CD8-positive, alpha-beta T cell (primary cell): ENCODE measurements at regions of chr4 and their contacts with region 1.

Region 1: GRCh38 chr4:113935190-113935589 is 44.3 kb downstream of the ARSJ start:
- DNase-seq: no peak
- ATAC-seq: no peak
- H3K4me3 ChIP-seq: no peak overlapping the region
- H3K4me3 Mint-ChIP-seq: no peak overlapping the region
- H3K27ac ChIP-seq: no peak overlapping the region
- H3K27ac Mint-ChIP-seq: no peak overlapping the region
- H3K4me1 ChIP-seq: no peaks in the 10 kb centered on the region
- H3K4me1 Mint-ChIP-seq: no peaks in the 10 kb centered on the region
- H3K27me3 ChIP-seq: no peaks in the 10 kb centered on the region
- H3K27me3 Mint-ChIP-seq: no peaks in the 10 kb centered on the region
- CTCF ChIP-seq: no peak

Region 2: GRCh38 chr4:113881256-113881655 is 53.9 kb before region 1 on chr4:
- CTCF ChIA-PET with region 1: no interaction called
- POLR2A ChIA-PET with region 1: no interaction called
- intact Hi-C with region 1: no loop called
- DNase-seq: no peak
- ATAC-seq: no peak
- H3K4me3 ChIP-seq: no peak overlapping the region
- H3K4me3 Mint-ChIP-seq: no peak overlapping the region
- H3K27ac ChIP-seq: no peak overlapping the region
- H3K27ac Mint-ChIP-seq: no peak overlapping the region
- H3K4me1 ChIP-seq: peaks cover 6% of the 10 kb centered on the region
- H3K4me1 Mint-ChIP-seq: peaks cover 2% of the 10 kb centered on the region
- H3K27me3 ChIP-seq: no peaks in the 10 kb centered on the region
- H3K27me3 Mint-ChIP-seq: no peaks in the 10 kb centered on the region
- CTCF ChIP-seq: no peak

Region 3: DNA sequence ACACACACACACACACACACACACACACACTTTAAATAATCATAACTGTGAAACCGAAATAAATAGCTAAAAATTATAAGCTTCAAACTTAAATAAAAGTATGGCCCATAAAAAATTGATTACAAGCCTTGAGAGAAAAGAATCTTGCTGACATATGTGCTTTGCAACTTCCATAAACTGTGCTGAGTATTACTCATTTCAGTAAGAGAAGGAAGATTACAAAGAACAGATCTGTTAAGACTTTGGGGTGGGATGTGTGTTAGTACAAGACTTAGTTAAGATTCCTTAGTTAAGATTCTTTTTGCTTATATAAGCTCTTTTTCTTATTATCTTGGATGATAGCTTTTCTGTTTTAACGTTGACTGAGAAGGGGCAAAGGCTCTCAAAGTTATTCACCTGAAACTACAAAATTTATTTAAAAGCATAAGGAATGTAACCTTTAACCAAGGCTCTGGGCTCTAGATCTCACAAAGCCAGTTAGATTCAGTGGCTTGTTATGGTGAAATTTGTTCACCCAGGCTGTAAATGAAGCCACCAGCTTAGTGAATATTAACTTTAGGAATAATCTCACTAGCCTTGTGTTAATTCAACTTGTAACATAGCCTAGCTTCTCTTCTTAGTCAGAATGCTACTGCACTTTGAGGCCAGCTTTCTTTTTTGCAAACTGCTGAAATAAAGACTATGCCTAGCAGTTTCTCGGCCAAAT is 13.9 kb before region 1 on chr4:
- CTCF ChIA-PET with region 1: no interaction called
- POLR2A ChIA-PET with region 1: no interaction called
- intact Hi-C with region 1: loop called in 1 of 2 experiments (anchors 2 kb)
- DNase-seq: no peak
- ATAC-seq: no peak
- H3K4me3 ChIP-seq: no peak overlapping the region
- H3K4me3 Mint-ChIP-seq: no peak overlapping the region
- H3K27ac ChIP-seq: no peak overlapping the region
- H3K27ac Mint-ChIP-seq: no peak overlapping the region
- H3K4me1 ChIP-seq: no peaks in the 10 kb centered on the region
- H3K4me1 Mint-ChIP-seq: peaks cover 2% of the 10 kb centered on the region
- H3K27me3 ChIP-seq: no peaks in the 10 kb centered on the region
- H3K27me3 Mint-ChIP-seq: no peaks in the 10 kb centered on the region
- CTCF ChIP-seq: no peak